ENCODE measurements at regions of chr14 and their contacts with region 1.

Region 1: DNA sequence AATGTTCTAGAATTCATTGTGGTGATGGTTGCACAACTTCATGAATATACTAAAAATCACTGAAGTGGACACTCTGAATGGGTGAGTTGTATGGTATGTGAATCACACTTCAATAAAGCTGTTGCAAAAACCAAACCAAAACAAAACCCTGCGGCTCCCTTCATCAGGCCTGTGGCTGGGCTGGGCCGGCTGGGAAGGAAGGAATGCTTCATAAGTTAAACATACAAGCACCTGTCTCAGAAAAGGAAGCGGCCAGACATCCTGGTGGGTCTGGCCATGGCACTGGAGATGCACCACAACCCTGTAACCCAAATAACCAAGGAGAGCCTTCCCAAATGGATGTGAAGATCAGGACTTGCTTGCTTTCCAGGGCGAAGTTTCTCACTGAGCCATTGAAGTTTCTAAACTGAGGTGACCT is 34.9 kb downstream of the TTC7B start:
- DNase-seq: peak in 1 of 3 donors; percentile 36
- ATAC-seq: no peak
- H3K4me3 ChIP-seq: no peak overlapping the region
- H3K27ac ChIP-seq: no peak overlapping the region
- H3K4me1 ChIP-seq: peaks cover 0 to 12% (median 4%) of the 10 kb centered on the region in 4 donors
- H3K27me3 ChIP-seq: no peaks in the 10 kb centered on the region
- CTCF ChIP-seq: no peak
- POLR2A ChIP-seq: no peak

Region 2: GRCh38 chr14:90692061-90692460 is 89.3 kb before region 1 on chr14:
- intact Hi-C with region 1: no loop called
- DNase-seq: no peak
- ATAC-seq: no peak
- H3K4me3 ChIP-seq: no peak overlapping the region
- H3K27ac ChIP-seq: no peak overlapping the region
- H3K4me1 ChIP-seq: peaks cover 0 to 2% (median 0%) of the 10 kb centered on the region in 4 donors
- H3K27me3 ChIP-seq: no peaks in the 10 kb centered on the region
- CTCF ChIP-seq: no peak
- POLR2A ChIP-seq: no peak

Region 3: GRCh38 chr14:90815822-90816700 is 34.7 kb after region 1 on chr14 and contains the start of gene TTC7B:
- intact Hi-C with region 1: loop called (anchors 5 to 10 kb)
- DNase-seq: peak in 2 of 3 donors; percentile 52 to 58
- ATAC-seq: peak; percentile 38 to 55 (median 46)
- H3K4me3 ChIP-seq: peak within 1 kb of the TSS; percentile 58 to 72 (median 66)
- H3K27ac ChIP-seq: peak within 1 kb of the TSS in 2 of 3 donors; percentile 64 to 76
- H3K4me1 ChIP-seq: peaks cover 0 to 77% (median 38%) of the 10 kb centered on the region in 4 donors
- H3K27me3 ChIP-seq: no peaks in the 10 kb centered on the region
- CTCF ChIP-seq: peak in 2 of 4 donors; percentile 9 to 46
- POLR2A ChIP-seq: no peak
- total RNA-seq, gene TTC7B: 18.4 to 56.1 (median 37.5) TPM

Region 4: GRCh38 chr14:90827916-90828610 is 46.7 kb after region 1 on chr14:
- intact Hi-C with region 1: loop called in 1 of 2 experiments (anchors 10 kb)
- DNase-seq: peak; percentile 96 to 97 (median 97)
- ATAC-seq: peak; percentile 98 to 99 (median 99)
- H3K4me3 ChIP-seq: peak overlapping the region; percentile 20 to 37 (median 35)
- H3K27ac ChIP-seq: peak overlapping the region; percentile 77 to 87 (median 86)
- H3K4me1 ChIP-seq: peaks cover 0 to 11% (median 0%) of the 10 kb centered on the region in 4 donors
- H3K27me3 ChIP-seq: no peaks in the 10 kb centered on the region
- CTCF ChIP-seq: no peak
- POLR2A ChIP-seq: peak; percentile 81